ENCODE measurements at regions of chr9 and their contacts with region 1.

Region 1: DNA sequence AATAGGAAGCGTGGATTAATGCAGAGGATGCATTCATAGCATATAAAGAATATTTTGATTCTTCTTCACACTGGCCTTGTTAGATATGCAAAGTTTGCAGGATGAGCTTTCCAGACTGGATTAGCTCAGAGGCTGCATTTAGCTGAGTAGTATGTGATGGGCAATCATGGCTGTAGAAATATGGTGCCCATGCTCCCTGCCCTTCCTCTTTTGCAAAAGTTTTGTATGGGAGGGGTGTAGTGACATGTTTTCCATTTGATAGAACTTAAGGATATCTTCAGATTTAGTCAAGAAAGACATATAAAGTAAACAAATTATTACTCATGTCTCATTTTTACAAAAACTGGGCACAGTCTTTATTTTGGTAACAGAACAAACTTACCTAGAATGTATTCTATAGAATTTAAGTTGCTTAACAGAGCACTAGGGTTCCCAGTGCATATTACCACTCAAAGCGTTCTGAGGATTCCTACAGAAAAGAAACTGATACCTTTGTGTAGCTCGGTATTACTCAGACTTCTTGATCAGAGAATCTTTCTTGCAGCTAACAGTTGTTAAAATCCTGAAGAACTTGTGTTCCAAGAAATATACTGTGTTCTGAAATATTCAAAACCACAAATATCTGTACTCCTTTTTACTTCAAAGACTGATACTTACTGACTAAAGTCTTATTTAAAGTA is 9.8 kb downstream of the GTF3C4 start:
- DNase-seq: no peak
- ATAC-seq: no peak

Region 2: DNA sequence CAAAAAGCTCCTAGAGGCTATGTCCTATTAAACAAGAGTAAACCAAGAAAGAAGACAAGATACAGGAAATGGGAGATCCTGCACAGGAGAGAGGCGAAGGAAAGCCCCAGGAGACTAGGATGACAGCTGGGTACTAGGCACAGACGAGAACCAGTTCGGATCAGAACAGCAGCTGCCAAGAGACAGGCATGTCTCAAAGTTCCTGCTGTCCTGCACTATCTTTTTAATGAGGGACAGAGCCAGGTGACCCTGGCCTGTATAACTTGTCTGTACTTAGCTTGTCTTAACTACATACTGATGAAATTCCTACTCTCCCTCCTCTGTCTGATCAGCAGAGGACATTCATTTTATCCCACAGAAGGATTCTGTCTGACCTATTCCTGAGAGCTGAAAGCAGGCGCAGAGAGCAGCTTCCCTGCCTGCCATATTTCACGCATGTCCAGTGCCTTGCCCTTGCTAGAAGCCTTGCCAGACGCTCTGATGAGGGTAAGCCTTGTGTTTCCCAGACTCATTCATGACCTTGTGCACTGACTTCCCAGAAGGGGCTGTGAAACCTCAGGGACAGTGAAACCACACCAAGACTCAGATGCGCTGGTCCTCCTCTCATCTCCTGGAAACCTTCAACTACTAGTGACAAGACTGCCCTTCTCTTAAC is 239.7 kb after region 1 on chr9:
- intact Hi-C with region 1: loop called in 1 of 2 experiments (anchors 10 kb)
- DNase-seq: no peak
- ATAC-seq: no peak